ENCODE measurements at regions of chr4 and their contacts with region 1.

Region 1: DNA sequence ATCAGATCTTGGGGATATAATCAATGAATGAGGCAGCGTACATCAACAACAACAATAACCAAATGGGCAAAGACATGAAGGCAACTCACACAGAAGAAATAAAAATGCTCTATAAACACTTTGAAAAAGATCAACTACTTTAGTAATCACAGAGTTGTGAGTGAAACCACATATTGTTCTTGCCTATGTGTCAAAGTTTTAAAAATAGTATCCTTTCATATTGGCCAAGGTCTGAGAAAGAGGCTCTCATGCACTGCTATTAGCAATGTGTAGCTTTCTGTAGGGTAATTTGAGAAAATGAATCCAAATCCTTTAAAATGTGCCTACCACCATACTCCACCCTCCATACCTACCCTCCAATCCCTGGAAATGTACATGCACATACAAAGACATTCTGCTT is 25.0 kb downstream of the COQ2 start:
- DNase-seq: no peak
- ATAC-seq: peak; percentile 69
- H3K4me3 ChIP-seq: no peak overlapping the region
- H3K27ac ChIP-seq: peak overlapping the region; percentile 28
- H3K4me1 ChIP-seq: peaks cover 32% of the 10 kb centered on the region
- H3K27me3 ChIP-seq: no peaks in the 10 kb centered on the region
- CTCF ChIP-seq: no peak
- EP300 ChIP-seq: no peak
- POLR2A ChIP-seq: no peak
- RAD21 ChIP-seq: no peak

Region 2: GRCh38 chr4:83054928-83055327 is 204.7 kb before region 1 on chr4:
- CTCF ChIA-PET with region 1: interaction called, 19 read pairs
- POLR2A ChIA-PET with region 1: no interaction called
- RAD21 ChIA-PET with region 1: interaction called, 7 read pairs
- SMC1A ChIA-PET with region 1: interaction called, 7 read pairs
- in situ Hi-C with region 1: no loop called
- intact Hi-C with region 1: no loop called
- DNase-seq: no peak
- ATAC-seq: peak; percentile 67
- H3K4me3 ChIP-seq: no peak overlapping the region
- H3K27ac ChIP-seq: no peak overlapping the region
- H3K4me1 ChIP-seq: no peaks in the 10 kb centered on the region
- H3K27me3 ChIP-seq: no peaks in the 10 kb centered on the region
- CTCF ChIP-seq: peak; percentile 19 to 48 (median 38); a peak in 3 of 6 replicates
- EP300 ChIP-seq: no peak
- POLR2A ChIP-seq: no peak
- RAD21 ChIP-seq: peak; percentile 51

Region 3: GRCh38 chr4:83189631-83190136 is 69.9 kb before region 1 on chr4:
- CTCF ChIA-PET with region 1: no interaction called
- POLR2A ChIA-PET with region 1: no interaction called
- RAD21 ChIA-PET with region 1: no interaction called
- SMC1A ChIA-PET with region 1: no interaction called
- in situ Hi-C with region 1: no loop called
- intact Hi-C with region 1: no loop called
- DNase-seq: no peak
- ATAC-seq: no peak
- H3K4me3 ChIP-seq: no peak overlapping the region
- H3K27ac ChIP-seq: no peak overlapping the region
- H3K4me1 ChIP-seq: no peaks in the 10 kb centered on the region
- H3K27me3 ChIP-seq: no peaks in the 10 kb centered on the region
- CTCF ChIP-seq: no peak
- EP300 ChIP-seq: no peak
- POLR2A ChIP-seq: no peak
- RAD21 ChIP-seq: no peak

Region 4: DNA sequence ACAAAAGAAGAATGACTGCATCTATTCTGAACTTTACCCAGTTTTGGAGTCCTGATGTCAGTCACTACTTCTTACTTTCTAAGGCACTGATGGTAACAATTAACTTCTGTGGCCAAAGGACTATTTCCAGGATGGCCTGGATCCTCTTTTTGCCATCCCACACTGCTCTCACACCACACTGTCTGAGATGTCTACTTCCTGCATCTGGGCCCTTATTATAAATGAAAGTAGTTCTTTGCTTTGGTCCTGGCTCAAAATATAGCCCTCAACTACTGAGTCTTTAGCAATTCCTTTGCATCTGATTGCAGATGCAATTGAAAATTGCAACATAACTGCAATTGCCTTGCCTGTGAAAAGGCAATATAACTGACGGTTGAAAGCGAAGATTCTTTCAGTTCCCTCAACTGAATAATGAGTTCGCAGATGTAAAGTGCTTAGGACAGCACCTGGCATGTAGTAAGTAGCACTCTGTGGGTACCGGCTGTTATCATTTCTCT is 19.2 kb before region 1 on chr4:
- CTCF ChIA-PET with region 1: interaction called, 9 read pairs
- POLR2A ChIA-PET with region 1: interaction called, 3 read pairs
- RAD21 ChIA-PET with region 1: interaction called, 5 read pairs
- SMC1A ChIA-PET with region 1: interaction called, 14 read pairs
- in situ Hi-C with region 1: no loop called
- intact Hi-C with region 1: loop called (anchors 2 kb)
- DNase-seq: peak; percentile 96
- ATAC-seq: peak; percentile 90
- H3K4me3 ChIP-seq: no peak overlapping the region
- H3K27ac ChIP-seq: peak overlapping the region; percentile 75; the same call in 1 of the 2 replicates
- H3K4me1 ChIP-seq: peaks cover 20% of the 10 kb centered on the region
- H3K27me3 ChIP-seq: no peaks in the 10 kb centered on the region
- CTCF ChIP-seq: no peak
- EP300 ChIP-seq: peak; percentile 76 to 89; a peak in 3 of 4 replicates
- POLR2A ChIP-seq: no peak
- RAD21 ChIP-seq: no peak

Region 5: DNA sequence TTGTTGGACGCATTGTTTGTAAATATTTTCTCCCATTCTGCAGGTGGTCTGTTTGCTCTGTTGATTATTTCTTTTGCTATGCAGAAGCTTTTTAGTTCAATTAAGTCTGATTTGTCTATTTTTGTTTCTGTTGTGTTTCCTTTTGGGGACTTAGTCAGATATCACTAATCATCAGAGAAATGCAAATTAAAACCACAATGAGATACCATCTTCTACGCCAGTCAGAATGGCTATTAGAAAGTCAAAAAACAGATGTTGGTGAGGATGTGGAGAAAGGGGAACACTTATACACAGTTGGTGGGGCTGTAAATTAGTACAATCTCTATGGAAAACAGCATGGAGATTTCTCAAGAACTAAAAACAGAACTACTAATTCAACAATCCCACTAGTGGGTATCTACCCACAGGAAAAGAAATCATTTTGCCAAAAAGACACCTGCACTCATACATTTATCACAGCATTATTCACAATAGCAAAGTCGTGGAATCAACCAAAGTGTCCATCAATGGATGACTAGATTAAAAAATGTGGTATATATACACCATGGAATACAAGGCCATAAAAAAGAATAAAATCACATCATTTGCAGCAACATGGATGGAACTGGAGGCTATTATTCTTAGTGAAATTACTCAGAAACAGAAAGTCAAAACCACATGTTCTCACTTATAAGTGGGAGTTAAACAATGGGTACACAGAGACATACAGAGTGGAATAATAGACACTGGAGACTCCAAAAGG is 16.9 kb after region 1 on chr4:
- CTCF ChIA-PET with region 1: interaction called, 80 read pairs
- POLR2A ChIA-PET with region 1: interaction called, 8 read pairs
- RAD21 ChIA-PET with region 1: interaction called, 54 read pairs
- SMC1A ChIA-PET with region 1: interaction called, 85 read pairs
- in situ Hi-C with region 1: no loop called
- intact Hi-C with region 1: no loop called
- DNase-seq: no peak
- ATAC-seq: peak; percentile 70
- H3K4me3 ChIP-seq: peak overlapping the region; percentile 26; the same call in 1 of the 2 replicates
- H3K27ac ChIP-seq: peak overlapping the region; percentile 78
- H3K4me1 ChIP-seq: peaks cover 44% of the 10 kb centered on the region
- H3K27me3 ChIP-seq: no peaks in the 10 kb centered on the region
- CTCF ChIP-seq: no peak
- EP300 ChIP-seq: peak in 1 of 2 experiments; percentile 70; a peak in 1 of 4 replicates
- POLR2A ChIP-seq: no peak
- RAD21 ChIP-seq: no peak